ENCODE measurements at regions of chr18 and their contacts with region 1.

Region 1: DNA sequence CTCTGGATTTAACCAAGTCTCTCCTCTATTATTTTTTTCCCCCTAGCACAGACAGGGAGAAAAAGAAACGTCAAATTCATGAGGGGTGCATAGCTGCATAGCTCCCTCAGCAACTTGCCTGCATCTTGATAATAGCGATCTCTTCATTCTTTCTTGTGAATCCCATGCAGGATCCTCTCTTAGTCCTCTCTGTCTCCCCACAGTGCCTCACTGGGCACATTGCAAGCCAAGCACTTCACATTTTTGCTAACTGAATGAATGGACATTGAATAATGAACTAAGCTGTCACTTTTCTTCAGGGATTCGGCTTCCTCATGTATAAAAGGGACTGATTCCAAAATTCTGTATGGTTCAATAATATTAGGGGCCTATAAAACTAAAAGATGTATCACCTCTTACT is 2.9 kb upstream of the EPB41L3 start:
- DNase-seq: no peak
- H3K4me3 ChIP-seq: no peak overlapping the region
- H3K27ac ChIP-seq: no peak overlapping the region
- H3K4me1 ChIP-seq: peaks cover 0 to 18% (median 12%) of the 10 kb centered on the region in 4 donors
- H3K27me3 ChIP-seq: peaks cover 0 to 42% (median 0%) of the 10 kb centered on the region in 4 donors
- CTCF ChIP-seq: peak in 2 of 3 experiments; percentile 12 to 41
- EP300 ChIP-seq: no peak
- POLR2A ChIP-seq: no peak

Region 2: DNA sequence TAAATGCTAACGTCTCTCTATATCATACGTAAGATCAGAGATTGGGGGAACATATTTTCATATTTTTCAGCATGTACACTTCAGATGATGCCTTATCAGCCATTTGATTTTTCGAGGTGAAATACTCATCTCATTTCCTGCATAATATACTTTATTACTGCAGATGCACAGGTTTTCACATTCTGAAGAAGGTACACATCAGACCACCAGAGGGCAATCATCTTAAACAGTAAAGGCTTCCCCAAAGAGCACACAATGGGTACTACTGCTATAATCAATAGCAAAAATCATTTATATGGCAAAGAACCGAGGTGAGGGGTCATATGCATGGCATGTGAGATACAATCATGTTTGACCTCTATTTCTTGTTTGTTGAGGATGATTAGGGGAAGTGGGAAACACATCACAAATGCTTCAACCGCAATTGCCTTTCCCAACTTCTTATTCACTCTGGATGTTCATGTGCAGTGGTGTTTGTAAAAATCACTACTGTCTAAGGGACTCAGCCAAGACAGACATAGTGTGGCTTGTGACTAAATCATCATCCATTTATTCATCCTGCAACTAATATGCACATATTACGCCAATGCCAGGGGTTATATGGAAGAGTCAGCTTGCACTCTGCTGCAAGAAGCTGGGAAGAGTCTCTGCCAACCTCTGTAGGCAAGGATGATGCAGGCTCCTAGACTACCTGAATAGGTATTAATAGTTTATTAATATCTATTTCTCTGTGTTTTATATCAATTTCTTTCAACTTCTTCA is 121.6 kb before region 1 on chr18:
- intact Hi-C with region 1: loop called (anchors 10 kb)
- DNase-seq: no peak
- H3K4me3 ChIP-seq: no peak overlapping the region
- H3K27ac ChIP-seq: no peak overlapping the region
- H3K4me1 ChIP-seq: no peaks in the 10 kb centered on the region
- H3K27me3 ChIP-seq: no peaks in the 10 kb centered on the region
- CTCF ChIP-seq: peak; percentile 9 to 37 (median 31)
- EP300 ChIP-seq: no peak
- POLR2A ChIP-seq: no peak

Measured in esophagus muscularis mucosa (tissue), 4 donors.